AG04450 (cell line): ENCODE measurements at regions of chr17 and their contacts with region 1.

Region 1: GRCh38 chr17:59707114-59707970 is at the starts of genes PTRH2 and VMP1:
- DNase-seq: peak; percentile 99
- H3K4me3 ChIP-seq: peak within 1 kb of the TSS; percentile 95
- H3K27ac ChIP-seq: peak within 1 kb of the TSS; percentile 93
- H3K27me3 ChIP-seq: no peaks in the 10 kb centered on the region
- CTCF ChIP-seq: no peak
- polyA plus RNA-seq, gene PTRH2: 56.0 and 56.1 TPM in 2 replicates
- polyA plus RNA-seq, gene VMP1: 174 and 196 TPM in 2 replicates

Region 2: DNA sequence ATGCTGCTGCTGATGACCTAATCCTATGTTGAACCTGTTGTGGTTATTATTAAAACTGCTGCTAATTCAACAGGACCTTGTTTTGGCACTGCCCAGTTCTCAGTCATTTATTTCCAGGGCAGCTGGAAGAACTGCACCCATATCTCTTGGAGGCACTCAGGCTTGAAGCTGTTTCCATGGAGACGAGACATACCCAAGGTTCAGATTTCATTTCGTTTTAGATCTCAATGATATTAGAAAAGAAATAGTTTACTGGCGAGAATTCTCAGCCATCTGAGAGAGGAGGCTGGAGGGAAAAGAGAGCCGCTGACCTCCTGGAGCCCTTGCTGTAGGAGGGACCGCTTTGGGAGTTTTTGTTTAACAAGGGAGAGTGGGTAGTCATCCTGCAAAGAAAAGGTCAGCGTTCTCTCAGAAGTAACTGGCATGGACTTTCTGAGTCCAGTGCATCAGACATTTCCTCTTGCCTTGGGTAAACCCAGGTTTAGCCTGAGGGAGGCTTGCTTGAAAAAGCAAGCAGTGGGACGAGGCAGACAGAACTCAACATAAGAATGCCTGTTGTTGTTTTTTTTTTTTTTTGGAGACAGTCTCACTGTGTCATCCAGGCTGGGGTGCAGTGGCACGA is 300.4 kb before region 1 on chr17:
- CTCF ChIA-PET with region 1: no interaction called
- POLR2A ChIA-PET with region 1: no interaction called
- DNase-seq: peak; percentile 26
- H3K4me3 ChIP-seq: no peak overlapping the region
- H3K27ac ChIP-seq: peak overlapping the region; percentile 39
- H3K27me3 ChIP-seq: no peaks in the 10 kb centered on the region
- CTCF ChIP-seq: no peak

Region 3: GRCh38 chr17:59619293-59620063 is 87.9 kb before region 1 on chr17 and contains the start of gene CLTC:
- CTCF ChIA-PET with region 1: no interaction called
- POLR2A ChIA-PET with region 1: interaction called, 11 read pairs
- DNase-seq: peak; percentile 96
- H3K4me3 ChIP-seq: peak within 1 kb of the TSS; percentile 73
- H3K27ac ChIP-seq: peak within 1 kb of the TSS; percentile 100
- H3K27me3 ChIP-seq: no peaks in the 10 kb centered on the region
- CTCF ChIP-seq: no peak
- polyA plus RNA-seq, gene CLTC: 376 and 441 TPM in 2 replicates

Region 4: GRCh38 chr17:59859444-59860025 is 152.2 kb after region 1 on chr17:
- CTCF ChIA-PET with region 1: interaction called, 10 read pairs
- POLR2A ChIA-PET with region 1: no interaction called
- DNase-seq: no peak
- H3K4me3 ChIP-seq: no peak overlapping the region
- H3K27ac ChIP-seq: no peak overlapping the region
- H3K27me3 ChIP-seq: no peaks in the 10 kb centered on the region
- CTCF ChIP-seq: peak; percentile 68